ENCODE measurements at regions of chr2 and their contacts with region 1.

Region 1: DNA sequence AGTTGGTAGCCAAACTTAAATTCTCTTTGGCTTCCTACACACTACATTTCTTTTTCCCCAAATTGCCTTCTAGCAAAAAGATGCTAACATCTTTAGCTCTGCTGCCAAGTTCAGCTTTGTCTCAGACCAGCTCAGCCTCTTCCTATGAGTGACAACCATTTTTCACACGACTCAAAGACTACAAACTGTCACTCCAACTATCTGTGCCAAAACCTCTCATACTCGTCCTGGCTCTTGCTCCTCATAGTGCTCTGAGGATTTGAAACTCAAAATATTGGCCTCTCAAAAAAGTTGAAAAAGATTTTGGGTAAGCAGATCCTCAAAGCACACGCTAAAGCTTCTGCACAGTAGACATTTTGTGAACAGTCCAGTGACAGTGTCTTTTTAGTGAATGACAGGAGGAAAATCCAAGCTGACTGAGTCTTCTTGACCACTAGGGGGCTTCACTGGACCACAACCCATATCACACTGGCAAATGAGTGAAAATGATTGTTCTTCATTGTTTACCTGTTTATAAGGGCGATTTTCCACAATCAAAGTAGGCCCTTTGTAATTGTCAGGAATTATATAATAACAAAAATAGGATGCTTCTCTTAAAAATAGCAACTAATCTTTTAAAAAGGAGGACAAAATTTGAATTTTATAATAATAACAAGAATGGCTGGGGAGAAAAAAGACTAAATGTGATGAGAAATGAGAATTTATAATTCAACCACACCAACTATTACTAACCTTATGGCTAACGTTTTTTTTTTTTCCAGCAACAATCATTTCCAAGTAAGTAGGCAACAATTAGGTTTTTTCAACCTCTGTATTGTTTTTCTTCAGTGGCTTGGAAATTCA is 85.5 kb upstream of the PGAP1 start:
- DNase-seq: peak; percentile 60
- H3K4me3 ChIP-seq: no peak overlapping the region
- H3K27ac ChIP-seq: no peak overlapping the region
- H3K4me1 ChIP-seq: no peaks in the 10 kb centered on the region
- H3K27me3 ChIP-seq: no peaks in the 10 kb centered on the region
- CTCF ChIP-seq: peak; percentile 75 to 78
- POLR2A ChIP-seq: no peak

Region 2: GRCh38 chr2:196528486-196529223 is 483.4 kb before region 1 on chr2:
- CTCF ChIA-PET with region 1: no interaction called
- POLR2A ChIA-PET with region 1: no interaction called
- dilution Hi-C with region 1: no loop called
- intact Hi-C with region 1: no loop called
- DNase-seq: no peak
- H3K4me3 ChIP-seq: no peak overlapping the region
- H3K27ac ChIP-seq: no peak overlapping the region
- H3K4me1 ChIP-seq: no peaks in the 10 kb centered on the region
- H3K27me3 ChIP-seq: peaks cover 0 to 9% of the 10 kb centered on the region in 2 experiments
- CTCF ChIP-seq: no peak
- POLR2A ChIP-seq: no peak

Region 3: GRCh38 chr2:196849895-196850294 is 162.1 kb before region 1 on chr2:
- CTCF ChIA-PET with region 1: interaction called, 4 read pairs
- POLR2A ChIA-PET with region 1: no interaction called
- dilution Hi-C with region 1: no loop called
- intact Hi-C with region 1: loop called (anchors 1 kb)
- DNase-seq: peak; percentile 43
- H3K4me3 ChIP-seq: no peak overlapping the region
- H3K27ac ChIP-seq: no peak overlapping the region
- H3K4me1 ChIP-seq: peaks cover 17% of the 10 kb centered on the region
- H3K27me3 ChIP-seq: no peaks in the 10 kb centered on the region
- CTCF ChIP-seq: peak; percentile 27 to 32
- POLR2A ChIP-seq: no peak

Region 4: DNA sequence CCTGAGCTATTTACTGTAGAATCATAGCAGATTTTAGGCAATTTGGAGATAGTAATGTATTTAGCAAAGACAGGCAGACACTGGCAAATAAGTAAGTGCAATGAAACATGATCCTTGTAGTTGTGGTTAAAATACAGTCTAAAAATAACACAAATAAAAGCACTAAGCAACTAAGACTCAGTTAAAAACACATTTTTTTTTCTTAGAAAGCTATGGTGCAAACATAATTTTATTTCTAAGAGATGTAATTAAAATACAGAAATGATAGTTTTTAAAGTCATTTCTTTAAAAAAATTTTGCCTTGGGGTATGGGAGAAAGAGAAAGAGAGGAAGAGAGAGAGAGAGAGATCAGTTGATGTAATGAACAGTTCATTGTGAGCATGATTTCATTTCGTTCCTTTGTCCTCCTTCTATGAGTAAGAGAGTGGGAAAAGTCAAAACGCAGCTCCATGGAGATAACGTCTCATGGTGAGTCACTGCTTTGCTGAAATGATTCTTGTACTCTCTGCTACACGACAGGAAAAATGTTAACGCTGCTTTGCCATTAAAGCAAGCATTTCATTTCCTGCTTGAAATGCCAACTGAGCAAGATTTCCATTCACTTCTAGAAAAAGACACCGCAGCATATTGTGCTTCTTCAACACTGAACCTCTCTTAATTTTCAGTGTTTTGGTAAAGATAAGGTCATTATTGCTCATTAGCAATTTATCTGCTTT is 24.2 kb before region 1 on chr2:
- CTCF ChIA-PET with region 1: interaction called, 15 read pairs
- POLR2A ChIA-PET with region 1: no interaction called
- dilution Hi-C with region 1: no loop called
- intact Hi-C with region 1: loop called (anchors 1 kb)
- DNase-seq: peak; percentile 98
- H3K4me3 ChIP-seq: peak overlapping the region in 1 of 3 experiments; percentile 24
- H3K27ac ChIP-seq: peak overlapping the region; percentile 93
- H3K4me1 ChIP-seq: peaks cover 18% of the 10 kb centered on the region
- H3K27me3 ChIP-seq: no peaks in the 10 kb centered on the region
- CTCF ChIP-seq: no peak
- POLR2A ChIP-seq: peak; percentile 47

Region 5: GRCh38 chr2:197028230-197028629 is 16.2 kb after region 1 on chr2:
- CTCF ChIA-PET with region 1: interaction called, 19 read pairs
- POLR2A ChIA-PET with region 1: no interaction called
- dilution Hi-C with region 1: no loop called
- intact Hi-C with region 1: no loop called
- DNase-seq: peak; percentile 80
- H3K4me3 ChIP-seq: no peak overlapping the region
- H3K27ac ChIP-seq: peak overlapping the region; percentile 3
- H3K4me1 ChIP-seq: peaks cover 17% of the 10 kb centered on the region
- H3K27me3 ChIP-seq: no peaks in the 10 kb centered on the region
- CTCF ChIP-seq: no peak
- POLR2A ChIP-seq: no peak

Region 6: DNA sequence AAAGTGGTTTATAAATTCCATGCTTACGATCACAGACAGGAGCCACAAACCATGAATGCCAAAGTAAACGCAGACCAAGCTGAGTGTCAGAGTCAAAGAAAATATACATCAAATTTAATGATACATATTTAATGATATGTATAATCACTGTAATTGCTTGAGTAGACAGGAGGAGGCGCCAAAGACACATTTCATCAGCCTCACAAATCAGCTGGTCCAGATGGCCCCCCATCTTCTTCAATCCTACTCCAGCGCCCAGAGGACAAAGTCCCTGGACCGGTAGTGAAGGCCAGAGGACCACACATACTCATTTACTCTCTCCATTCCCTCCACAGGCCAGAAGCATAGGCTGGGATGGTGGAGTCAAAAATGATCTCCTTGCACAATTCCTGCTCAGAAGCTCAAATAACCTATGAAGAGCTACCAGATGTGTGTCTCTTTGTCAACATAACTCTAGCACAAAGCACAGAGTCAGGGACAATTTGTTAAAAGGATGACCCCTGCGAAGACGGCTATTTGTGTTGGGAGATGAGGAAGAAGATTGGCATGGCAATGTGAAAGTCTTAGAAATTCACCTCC is 63.8 kb after region 1 on chr2:
- CTCF ChIA-PET with region 1: interaction called, 5 read pairs
- POLR2A ChIA-PET with region 1: no interaction called
- dilution Hi-C with region 1: no loop called
- intact Hi-C with region 1: loop called (anchors 2 kb)
- DNase-seq: no peak
- H3K4me3 ChIP-seq: no peak overlapping the region
- H3K27ac ChIP-seq: no peak overlapping the region
- H3K4me1 ChIP-seq: peaks cover 10% of the 10 kb centered on the region
- H3K27me3 ChIP-seq: no peaks in the 10 kb centered on the region
- CTCF ChIP-seq: peak; percentile 20 to 52
- POLR2A ChIP-seq: no peak

Region 7: DNA sequence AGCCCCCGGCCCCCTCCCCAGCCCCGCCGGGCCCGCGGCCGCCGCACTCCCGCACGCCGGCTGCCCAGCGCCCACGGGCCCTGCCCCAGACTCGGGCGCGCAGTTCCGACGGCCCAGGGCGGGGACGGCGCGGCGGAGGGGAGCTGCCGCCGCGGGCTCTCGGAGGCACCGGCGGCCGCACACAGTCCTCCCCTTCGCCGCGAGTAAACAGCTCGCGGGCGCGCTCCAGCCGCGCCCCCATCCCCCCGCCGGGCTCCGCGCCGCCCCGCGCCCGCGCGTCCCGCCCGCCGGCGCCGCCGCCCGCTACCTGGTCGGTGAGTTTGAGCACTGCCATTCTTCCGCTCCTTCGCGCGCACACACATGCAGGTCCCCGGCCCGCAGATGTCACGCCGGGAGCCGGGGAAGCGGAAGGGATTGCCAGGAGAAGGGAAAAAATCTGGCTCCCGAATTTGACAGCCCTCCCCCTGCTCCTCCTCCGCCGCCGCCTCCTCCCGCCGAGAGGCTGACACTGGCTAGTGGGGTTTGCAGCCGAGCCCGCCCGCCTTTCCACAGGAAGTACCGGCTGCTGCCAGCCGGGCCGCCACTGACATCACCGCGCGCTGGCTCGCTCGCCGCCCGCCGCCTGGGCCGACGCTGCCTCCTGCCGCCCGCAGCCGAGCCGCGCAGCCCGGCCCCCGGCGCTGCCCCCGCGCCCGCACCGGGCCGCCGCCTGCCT is 298.4 kb after region 1 on chr2 and contains the start of gene ANKRD44:
- CTCF ChIA-PET with region 1: interaction called, 3 read pairs
- POLR2A ChIA-PET with region 1: no interaction called
- dilution Hi-C with region 1: no loop called
- intact Hi-C with region 1: loop called (anchors 2 kb)
- DNase-seq: peak; percentile 72
- H3K4me3 ChIP-seq: peak within 1 kb of the TSS; percentile 65 to 91 (median 85)
- H3K27ac ChIP-seq: no peak within 1 kb of the TSS
- H3K4me1 ChIP-seq: peaks cover 12% of the 10 kb centered on the region
- H3K27me3 ChIP-seq: peaks cover 11 to 16% of the 10 kb centered on the region in 2 experiments
- CTCF ChIP-seq: no peak
- POLR2A ChIP-seq: no peak
- total RNA-seq, gene ANKRD44: 6.1 and 8.1 TPM in 2 replicates

Region 8: GRCh38 chr2:197777823-197778407 is 765.9 kb after region 1 on chr2:
- CTCF ChIA-PET with region 1: no interaction called
- POLR2A ChIA-PET with region 1: no interaction called
- dilution Hi-C with region 1: no loop called
- intact Hi-C with region 1: loop called (anchors 5 kb)
- DNase-seq: peak; percentile 58
- H3K4me3 ChIP-seq: no peak overlapping the region
- H3K27ac ChIP-seq: no peak overlapping the region
- H3K4me1 ChIP-seq: no peaks in the 10 kb centered on the region
- H3K27me3 ChIP-seq: no peaks in the 10 kb centered on the region
- CTCF ChIP-seq: peak; percentile 28 to 32
- POLR2A ChIP-seq: no peak

Measured in endothelial cell of umbilical vein (primary cell).